Mucosa of descending colon (tissue), 3 donors: ENCODE measurements at regions of chr10 and their contacts with region 1.

Region 1: GRCh38 chr10:112471878-112472487 is 25.0 kb downstream of the VTI1A start:
- DNase-seq: no peak
- ATAC-seq: peak; percentile 89
- H3K4me3 ChIP-seq: no peak overlapping the region
- H3K4me1 ChIP-seq: peaks cover 9% of the 10 kb centered on the region
- CTCF ChIP-seq: peak; percentile 24

Region 2: DNA sequence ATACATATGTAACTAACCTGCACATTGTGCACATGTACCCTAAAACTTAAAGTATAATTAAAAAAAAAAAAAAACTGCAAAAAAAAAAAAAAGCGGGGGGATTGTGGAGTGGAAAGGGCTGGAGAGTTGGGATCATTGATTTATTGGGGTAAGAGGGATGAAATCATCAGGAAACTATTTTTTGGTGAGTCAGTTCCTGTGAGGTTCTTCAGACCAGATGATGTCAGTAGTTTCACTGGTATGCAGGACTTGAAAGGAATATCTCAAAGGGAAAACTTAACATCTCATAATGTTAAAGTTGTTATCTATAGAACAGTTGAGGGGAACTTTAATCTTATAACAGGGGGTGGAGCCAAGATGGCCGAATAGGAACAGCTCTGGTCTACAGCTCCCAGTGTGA is 221.4 kb before region 1 on chr10:
- intact Hi-C with region 1: no loop called
- DNase-seq: no peak
- ATAC-seq: no peak
- H3K4me3 ChIP-seq: no peak overlapping the region
- H3K4me1 ChIP-seq: no peaks in the 10 kb centered on the region
- CTCF ChIP-seq: no peak

Region 3: GRCh38 chr10:112532189-112532588 is 60.2 kb after region 1 on chr10:
- intact Hi-C with region 1: no loop called
- DNase-seq: no peak
- ATAC-seq: peak; percentile 66
- H3K4me3 ChIP-seq: no peak overlapping the region
- H3K4me1 ChIP-seq: no peaks in the 10 kb centered on the region
- CTCF ChIP-seq: no peak

Region 4: DNA sequence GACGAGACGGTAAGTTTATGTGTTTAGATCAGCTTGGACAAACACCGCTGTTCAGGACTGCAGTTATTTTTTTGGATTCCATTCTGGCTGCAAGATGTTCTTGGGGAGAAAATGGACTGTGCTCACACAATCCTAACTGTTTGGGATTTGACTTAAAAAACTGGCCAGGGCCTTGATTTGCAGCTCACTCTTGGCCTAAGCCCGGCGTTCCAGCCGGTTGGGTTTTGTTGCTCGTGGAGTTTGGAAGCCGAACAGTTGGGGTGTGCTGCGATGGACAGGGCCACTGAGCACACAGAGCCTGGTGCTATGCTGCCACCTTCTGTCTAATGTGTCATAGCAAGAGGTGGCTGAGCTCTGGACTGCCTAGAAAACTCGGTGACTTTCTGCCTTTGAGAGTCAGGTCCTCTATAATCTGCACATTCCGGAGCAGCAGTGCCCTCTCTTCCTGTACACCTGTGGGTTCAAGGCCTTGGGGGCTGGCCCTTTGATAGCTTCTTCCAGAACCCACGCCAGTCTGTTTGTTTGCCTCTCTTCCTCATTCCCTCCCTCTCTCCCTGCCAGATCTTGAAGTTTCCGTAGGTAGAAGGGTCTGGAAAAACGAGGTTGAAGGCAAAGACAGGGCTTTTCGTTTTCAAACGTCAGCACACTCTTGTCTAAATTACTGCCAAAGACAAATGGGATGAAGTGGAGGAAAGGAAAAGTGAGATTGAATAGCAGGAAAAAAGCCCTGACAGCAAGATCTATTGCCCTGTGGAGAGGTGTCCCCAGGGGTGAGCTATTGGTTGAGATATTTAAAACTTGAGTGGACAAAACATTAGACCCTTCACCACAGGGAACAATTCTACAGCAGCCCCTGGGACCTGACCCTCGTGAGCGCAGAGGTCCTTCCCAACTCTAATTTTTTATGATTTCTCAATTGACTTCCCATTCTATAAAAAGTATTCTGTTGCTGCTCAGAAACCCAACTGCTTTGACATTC is 913.3 kb after region 1 on chr10:
- intact Hi-C with region 1: loop called in 1 of 2 experiments (anchors 10 kb)
- DNase-seq: peak; percentile 68 to 84 (median 75)
- ATAC-seq: peak; percentile 95
- H3K4me3 ChIP-seq: no peak overlapping the region
- H3K4me1 ChIP-seq: no peaks in the 10 kb centered on the region
- CTCF ChIP-seq: peak; percentile 53

Region 5: GRCh38 chr10:113563306-113564088 is 1091.5 kb after region 1 on chr10:
- intact Hi-C with region 1: loop called in 1 of 2 experiments (anchors 5 kb)
- DNase-seq: peak; percentile 79 to 89 (median 87)
- ATAC-seq: peak; percentile 98
- H3K4me3 ChIP-seq: no peak overlapping the region
- H3K4me1 ChIP-seq: peaks cover 10% of the 10 kb centered on the region
- CTCF ChIP-seq: peak; percentile 98